ENCODE measurements at regions of chr3 and their contacts with region 1.

Region 1: DNA sequence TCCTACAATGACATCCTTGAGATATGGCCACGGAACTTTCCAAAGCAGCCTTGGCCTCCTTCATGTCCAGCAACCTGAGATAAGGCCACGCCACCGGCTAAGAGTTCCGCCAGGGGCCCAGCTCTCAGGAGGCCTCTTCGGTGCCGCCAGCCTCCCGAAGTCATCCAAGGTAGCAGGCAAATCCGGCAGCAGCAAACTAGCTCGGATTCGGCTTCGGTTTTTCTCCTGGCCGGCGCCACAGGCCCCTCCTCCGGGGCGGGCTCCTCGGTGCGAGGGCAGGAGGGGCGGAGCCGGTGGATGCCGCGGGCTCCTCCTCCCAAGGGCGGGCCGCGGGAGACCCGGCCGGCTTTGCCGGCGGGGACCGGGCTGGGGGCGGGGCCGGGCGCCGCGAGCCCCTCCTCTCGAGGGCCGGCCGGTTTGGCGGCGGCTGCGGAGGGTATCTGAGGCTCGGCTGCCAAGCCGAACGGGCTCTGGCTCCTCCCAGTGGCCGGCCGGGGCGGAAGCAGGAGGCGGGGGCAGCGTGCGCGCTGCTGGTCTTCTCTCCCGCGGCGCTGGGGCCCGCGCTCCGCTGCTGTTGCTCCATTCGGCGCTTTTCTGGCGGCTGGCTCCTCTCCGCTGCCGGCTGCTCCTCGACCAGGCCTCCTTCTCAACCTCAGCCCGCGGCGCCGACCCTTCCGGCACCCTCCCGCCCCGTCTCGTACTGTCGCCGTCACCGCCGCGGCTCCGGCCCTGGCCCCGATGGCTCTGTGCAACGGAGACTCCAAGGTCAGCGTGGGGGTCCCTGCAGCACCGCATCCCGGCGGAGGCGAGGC is at the start of gene GMPS:
- DNase-seq: peak; percentile 99
- ATAC-seq: peak; percentile 91
- H3K4me3 Mint-ChIP-seq: peak within 1 kb of the TSS; percentile 100
- H3K27ac Mint-ChIP-seq: peak within 1 kb of the TSS; percentile 98
- H3K4me1 Mint-ChIP-seq: peaks cover 15% of the 10 kb centered on the region
- H3K27me3 Mint-ChIP-seq: peaks cover 1% of the 10 kb centered on the region
- total RNA-seq, gene GMPS: 84.0 to 86.8 TPM

Region 2: GRCh38 chr3:155854141-155854940 is 16.0 kb before region 1 on chr3 and contains the start of gene SLC33A1:
- POLR2A ChIA-PET with region 1: interaction called, 41 read pairs
- DNase-seq: peak; percentile 98
- ATAC-seq: peak; percentile 92
- H3K4me3 Mint-ChIP-seq: peak within 1 kb of the TSS; percentile 87
- H3K27ac Mint-ChIP-seq: peak within 1 kb of the TSS; percentile 99
- H3K4me1 Mint-ChIP-seq: peaks cover 33% of the 10 kb centered on the region
- H3K27me3 Mint-ChIP-seq: no peaks in the 10 kb centered on the region
- total RNA-seq, gene SLC33A1: 26.4 to 27.3 TPM

Measured in activated naive CD8-positive, alpha-beta T cell treated with anti-CD3 and anti-CD28 coated beads, Interleukin-2, amount 10 ng/mL, durations not matched to agents 7 days and 5 days (primary cell).